Panc1 (cell line): ENCODE measurements at regions of chr11 and their contacts with region 1.

Region 1: GRCh38 chr11:68749229-68750123 is 1.8 kb downstream of the TESMIN start:
- DNase-seq: no peak
- ATAC-seq: 0 out of 2 replicates have a peak, but pooled peaks have one; percentile 2
- H3K4me3 ChIP-seq: no peak overlapping the region
- H3K27ac ChIP-seq: peak overlapping the region; percentile 70
- H3K4me1 ChIP-seq: peaks cover 26% of the 10 kb centered on the region
- H3K27me3 ChIP-seq: no peaks in the 10 kb centered on the region
- CTCF ChIP-seq: no peak

Region 2: DNA sequence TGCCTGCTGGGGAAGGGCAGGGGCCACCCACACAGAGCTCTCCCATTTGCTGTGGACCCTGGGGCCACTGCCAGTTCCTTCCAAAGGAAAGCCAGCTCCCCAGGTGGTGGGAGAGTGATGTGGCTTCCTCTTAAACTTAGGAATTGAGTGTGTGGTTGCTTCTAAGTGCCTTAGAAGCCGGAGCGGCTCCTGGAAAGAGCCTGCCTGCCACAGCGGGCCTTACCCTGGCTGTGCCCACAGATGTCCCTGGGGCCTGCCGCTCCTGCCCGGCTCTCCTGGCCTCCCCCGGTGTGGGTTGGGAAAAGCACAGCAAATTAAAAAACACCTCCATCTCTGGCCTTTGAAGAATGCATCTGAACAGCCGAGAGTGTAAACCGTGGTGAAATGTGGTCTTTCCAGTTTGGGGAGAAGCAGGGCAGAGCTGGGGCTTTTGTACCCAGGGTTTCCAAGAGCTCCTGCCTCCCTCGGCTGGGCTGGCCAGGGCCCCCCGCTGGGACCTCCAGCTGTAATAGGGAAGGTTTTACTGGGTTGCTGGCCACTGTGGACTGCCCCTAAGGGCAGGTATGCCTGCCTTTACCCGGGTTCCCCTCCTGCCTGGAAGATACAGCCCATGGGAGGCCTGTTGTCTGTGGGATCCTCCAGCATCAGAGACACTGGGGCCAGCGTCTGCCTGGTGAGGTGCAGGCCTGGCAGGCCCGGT is 406.9 kb before region 1 on chr11:
- CTCF ChIA-PET with region 1: no interaction called
- POLR2A ChIA-PET with region 1: no interaction called
- in situ Hi-C with region 1: no loop called
- intact Hi-C with region 1: no loop called
- DNase-seq: no peak
- ATAC-seq: peak; percentile 56
- H3K4me3 ChIP-seq: peak overlapping the region in 1 of 2 experiments; percentile 27; a peak in 2 of 4 replicates
- H3K27ac ChIP-seq: peak overlapping the region; percentile 95
- H3K4me1 ChIP-seq: peaks cover 72% of the 10 kb centered on the region
- H3K27me3 ChIP-seq: no peaks in the 10 kb centered on the region
- CTCF ChIP-seq: no peak

Region 3: GRCh38 chr11:68610452-68611116 is 138.9 kb before region 1 on chr11:
- CTCF ChIA-PET with region 1: no interaction called
- POLR2A ChIA-PET with region 1: no interaction called
- in situ Hi-C with region 1: no loop called
- intact Hi-C with region 1: loop called (anchors 10 kb)
- DNase-seq: no peak
- ATAC-seq: peak; percentile 54
- H3K4me3 ChIP-seq: no peak overlapping the region
- H3K27ac ChIP-seq: no peak overlapping the region
- H3K4me1 ChIP-seq: no peaks in the 10 kb centered on the region
- H3K27me3 ChIP-seq: no peaks in the 10 kb centered on the region
- CTCF ChIP-seq: no peak

Region 4: GRCh38 chr11:68659158-68659921 is 90.1 kb before region 1 on chr11:
- CTCF ChIA-PET with region 1: no interaction called
- POLR2A ChIA-PET with region 1: no interaction called
- in situ Hi-C with region 1: no loop called
- intact Hi-C with region 1: no loop called
- DNase-seq: peak; percentile 13
- ATAC-seq: 0 out of 2 replicates have a peak, but pooled peaks have one; percentile 36
- H3K4me3 ChIP-seq: no peak overlapping the region
- H3K27ac ChIP-seq: no peak overlapping the region
- H3K4me1 ChIP-seq: 0 out of 2 replicates have a peak, but pooled peaks cover 2% of the 10 kb centered on the region
- H3K27me3 ChIP-seq: no peaks in the 10 kb centered on the region
- CTCF ChIP-seq: no peak